Lower leg skin (tissue), 4 donors: ENCODE measurements at regions of chr19 and their contacts with region 1.

Region 1: GRCh38 chr19:4732680-4733114 is 9.1 kb upstream of the DPP9 start:
- DNase-seq: no peak
- H3K4me3 ChIP-seq: no peak overlapping the region
- CTCF ChIP-seq: peak in 1 of 3 donors; percentile 68
- POLR2A ChIP-seq: no peak

Region 2: DNA sequence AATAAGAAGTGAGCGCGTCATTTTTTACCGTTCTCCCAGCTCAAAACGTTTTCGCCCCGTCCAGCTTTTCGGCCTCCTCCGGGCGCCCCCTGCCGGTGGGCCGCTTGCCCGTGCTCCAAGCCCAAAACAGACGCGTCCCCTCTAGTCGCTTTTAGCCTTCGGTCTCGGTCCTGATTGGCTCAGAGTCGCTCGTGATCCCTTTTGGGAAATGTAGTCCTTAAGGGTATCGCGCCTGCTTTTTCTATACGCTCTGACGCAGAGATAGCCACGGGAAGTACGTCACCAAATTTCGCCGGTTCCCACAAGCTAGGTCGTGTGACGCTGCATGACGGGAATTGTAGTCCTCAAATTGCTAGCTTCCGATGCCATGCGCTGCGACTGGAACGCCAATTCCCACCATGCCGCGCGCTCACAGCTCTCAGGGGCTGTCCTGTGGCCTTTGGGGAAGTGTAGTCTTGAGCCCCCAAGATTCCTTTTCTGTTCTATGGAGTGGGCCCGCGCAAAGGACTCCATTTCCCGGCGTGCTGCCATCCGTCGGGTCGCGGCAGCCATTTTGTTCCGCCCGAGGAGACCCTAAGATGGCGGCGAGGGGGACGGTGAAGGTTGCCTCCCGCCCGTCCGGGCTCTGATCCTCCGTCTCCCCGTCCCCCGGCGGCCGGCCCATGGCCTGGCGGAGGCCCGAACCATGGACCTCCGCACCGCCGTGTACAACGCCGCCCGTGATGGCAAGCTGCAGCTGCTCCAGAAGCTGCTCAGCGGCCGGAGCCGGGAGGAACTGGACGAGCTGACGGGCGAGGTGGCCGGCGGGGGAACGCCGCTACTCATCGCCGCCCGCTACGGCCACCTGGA is 58.7 kb after region 1 on chr19 and contains the start of gene FEM1A:
- intact Hi-C with region 1: loop called (anchors 5 kb)
- DNase-seq: peak; percentile 100
- H3K4me3 ChIP-seq: peak within 1 kb of the TSS; percentile 79
- CTCF ChIP-seq: peak in 1 of 3 donors; percentile 95
- POLR2A ChIP-seq: no peak
- total RNA-seq, gene FEM1A: 46.4 to 55.3 (median 49.9) TPM

Region 3: GRCh38 chr19:4803736-4804695 is 71.3 kb after region 1 on chr19:
- intact Hi-C with region 1: loop called (anchors 5 kb)
- DNase-seq: no peak
- H3K4me3 ChIP-seq: no peak overlapping the region
- CTCF ChIP-seq: peak in 1 of 3 donors; percentile 28
- POLR2A ChIP-seq: no peak